ENCODE measurements at regions of chr19 and their contacts with region 1.

Region 1: GRCh38 chr19:41554907-41555306 is 21.1 kb upstream of the CEACAM21 start:
- DNase-seq: peak in 4 of 9 experiments; percentile 30 to 86 (median 54)
- ATAC-seq: peak; percentile 61
- H3K4me3 ChIP-seq: peak overlapping the region in 1 of 2 experiments; percentile 19
- H3K4me3 Mint-ChIP-seq: peak overlapping the region; percentile 67
- H3K27ac ChIP-seq: peak overlapping the region; percentile 6 to 72
- H3K27ac Mint-ChIP-seq: peak overlapping the region; percentile 86
- H3K4me1 ChIP-seq: peaks cover 57% of the 10 kb centered on the region
- H3K4me1 Mint-ChIP-seq: peaks cover 61% of the 10 kb centered on the region
- H3K27me3 ChIP-seq: no peaks in the 10 kb centered on the region
- H3K27me3 Mint-ChIP-seq: peaks cover 6% of the 10 kb centered on the region
- CTCF ChIP-seq: no peak

Region 2: GRCh38 chr19:41531438-41532311 is 23.2 kb before region 1 on chr19:
- CTCF ChIA-PET with region 1: interaction called, 5 read pairs
- POLR2A ChIA-PET with region 1: interaction called, 5 read pairs
- intact Hi-C with region 1: loop called in 1 of 2 experiments (anchors 2 kb)
- DNase-seq: peak; percentile 45 to 92 (median 80)
- ATAC-seq: peak; percentile 95
- H3K4me3 ChIP-seq: peak overlapping the region; percentile 23 to 40
- H3K4me3 Mint-ChIP-seq: peak overlapping the region; percentile 72
- H3K27ac ChIP-seq: peak overlapping the region; percentile 43 to 61
- H3K27ac Mint-ChIP-seq: peak overlapping the region; percentile 86
- H3K4me1 ChIP-seq: peaks cover 47% of the 10 kb centered on the region
- H3K4me1 Mint-ChIP-seq: peaks cover 48% of the 10 kb centered on the region
- H3K27me3 ChIP-seq: no peaks in the 10 kb centered on the region
- H3K27me3 Mint-ChIP-seq: peaks cover 26% of the 10 kb centered on the region
- CTCF ChIP-seq: no peak

Region 3: GRCh38 chr19:41541990-41542584 is 12.8 kb before region 1 on chr19:
- CTCF ChIA-PET with region 1: interaction called, 23 read pairs
- POLR2A ChIA-PET with region 1: interaction called, 7 read pairs
- intact Hi-C with region 1: loop called in 1 of 2 experiments (anchors 1 kb)
- DNase-seq: peak; percentile 55 to 89 (median 83)
- ATAC-seq: no peak
- H3K4me3 ChIP-seq: no peak overlapping the region
- H3K4me3 Mint-ChIP-seq: no peak overlapping the region
- H3K27ac ChIP-seq: no peak overlapping the region
- H3K27ac Mint-ChIP-seq: no peak overlapping the region
- H3K4me1 ChIP-seq: peaks cover 46% of the 10 kb centered on the region
- H3K4me1 Mint-ChIP-seq: peaks cover 43% of the 10 kb centered on the region
- H3K27me3 ChIP-seq: no peaks in the 10 kb centered on the region
- H3K27me3 Mint-ChIP-seq: peaks cover 4% of the 10 kb centered on the region
- CTCF ChIP-seq: peak; percentile 73

Region 4: GRCh38 chr19:41682386-41682785 is 127.5 kb after region 1 on chr19:
- CTCF ChIA-PET with region 1: no interaction called
- POLR2A ChIA-PET with region 1: no interaction called
- intact Hi-C with region 1: no loop called
- DNase-seq: no peak
- ATAC-seq: no peak
- H3K4me3 ChIP-seq: no peak overlapping the region
- H3K4me3 Mint-ChIP-seq: no peak overlapping the region
- H3K27ac ChIP-seq: no peak overlapping the region
- H3K27ac Mint-ChIP-seq: no peak overlapping the region
- H3K4me1 ChIP-seq: no peaks in the 10 kb centered on the region
- H3K4me1 Mint-ChIP-seq: no peaks in the 10 kb centered on the region
- H3K27me3 ChIP-seq: no peaks in the 10 kb centered on the region
- H3K27me3 Mint-ChIP-seq: peaks cover 37% of the 10 kb centered on the region
- CTCF ChIP-seq: no peak

Measured in CD8-positive, alpha-beta T cell (primary cell).